ENCODE measurements at regions of chr18 and their contacts with region 1.

Region 1: GRCh38 chr18:74196220-74197119 is 48.1 kb downstream of the TIMM21 start:
- DNase-seq: peak; percentile 57 to 78 (median 72)
- H3K4me3 ChIP-seq: no peak overlapping the region
- H3K4me3 Mint-ChIP-seq: peak overlapping the region; percentile 71 to 90 (median 81)
- H3K27ac ChIP-seq: no peak overlapping the region
- H3K27ac Mint-ChIP-seq: peak overlapping the region in 6 of 7 donors; percentile 23 to 79 (median 65)
- H3K4me1 ChIP-seq: peaks cover 5% of the 10 kb centered on the region
- H3K4me1 Mint-ChIP-seq: peaks cover 0 to 4% (median 0%) of the 10 kb centered on the region in 4 donors
- H3K27me3 ChIP-seq: no peaks in the 10 kb centered on the region
- H3K27me3 Mint-ChIP-seq: peaks cover 2 to 14% of the 10 kb centered on the region in 2 donors

Region 2: DNA sequence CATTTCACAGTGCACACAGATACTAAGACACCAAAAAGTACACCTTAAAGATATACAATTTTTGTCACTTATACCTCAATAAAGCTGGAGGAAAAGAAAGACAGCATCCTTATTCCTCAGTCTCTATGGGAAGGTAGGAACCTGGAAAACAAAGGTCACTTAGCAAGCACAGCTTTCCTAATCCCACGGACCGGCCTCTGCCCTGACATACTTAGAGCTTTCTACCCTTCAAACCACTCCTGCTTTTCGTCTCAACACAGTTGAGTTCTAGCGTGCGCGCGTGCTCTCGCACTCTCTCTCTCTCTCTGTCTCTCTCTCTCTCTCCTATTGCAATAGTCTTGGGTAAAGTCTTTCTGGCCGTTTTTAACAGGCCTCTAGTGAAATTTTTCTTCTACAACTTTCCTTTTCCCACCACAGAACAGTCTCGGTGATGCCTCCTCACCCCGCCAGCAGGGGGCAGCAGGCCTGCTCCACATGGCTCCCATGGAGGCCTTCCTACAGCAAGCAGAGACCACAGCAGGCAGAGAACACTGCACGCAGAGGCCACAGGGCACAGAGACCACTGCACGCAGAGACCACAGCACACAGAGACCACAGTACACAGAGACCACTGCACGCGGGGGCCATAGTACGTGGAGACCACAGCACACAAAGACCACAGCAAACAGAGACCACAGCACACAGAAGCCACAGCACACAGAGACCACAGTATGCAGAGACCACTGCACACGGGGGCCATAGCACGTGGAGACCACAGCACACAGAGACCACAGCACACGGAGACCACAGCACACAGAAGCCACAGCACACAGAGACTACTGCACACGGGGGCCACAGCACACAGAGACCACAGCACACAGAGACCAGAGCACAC is 155.8 kb before region 1 on chr18:
- CTCF ChIA-PET with region 1: no interaction called
- POLR2A ChIA-PET with region 1: no interaction called
- intact Hi-C with region 1: loop called (anchors 5 kb)
- DNase-seq: peak in 4 of 5 donors; percentile 30 to 43 (median 36)
- H3K4me3 ChIP-seq: no peak overlapping the region
- H3K4me3 Mint-ChIP-seq: no peak overlapping the region
- H3K27ac ChIP-seq: no peak overlapping the region
- H3K27ac Mint-ChIP-seq: no peak overlapping the region
- H3K4me1 ChIP-seq: no peaks in the 10 kb centered on the region
- H3K4me1 Mint-ChIP-seq: no peaks in the 10 kb centered on the region
- H3K27me3 ChIP-seq: no peaks in the 10 kb centered on the region
- H3K27me3 Mint-ChIP-seq: peaks cover 2 to 8% of the 10 kb centered on the region in 2 donors

Region 3: DNA sequence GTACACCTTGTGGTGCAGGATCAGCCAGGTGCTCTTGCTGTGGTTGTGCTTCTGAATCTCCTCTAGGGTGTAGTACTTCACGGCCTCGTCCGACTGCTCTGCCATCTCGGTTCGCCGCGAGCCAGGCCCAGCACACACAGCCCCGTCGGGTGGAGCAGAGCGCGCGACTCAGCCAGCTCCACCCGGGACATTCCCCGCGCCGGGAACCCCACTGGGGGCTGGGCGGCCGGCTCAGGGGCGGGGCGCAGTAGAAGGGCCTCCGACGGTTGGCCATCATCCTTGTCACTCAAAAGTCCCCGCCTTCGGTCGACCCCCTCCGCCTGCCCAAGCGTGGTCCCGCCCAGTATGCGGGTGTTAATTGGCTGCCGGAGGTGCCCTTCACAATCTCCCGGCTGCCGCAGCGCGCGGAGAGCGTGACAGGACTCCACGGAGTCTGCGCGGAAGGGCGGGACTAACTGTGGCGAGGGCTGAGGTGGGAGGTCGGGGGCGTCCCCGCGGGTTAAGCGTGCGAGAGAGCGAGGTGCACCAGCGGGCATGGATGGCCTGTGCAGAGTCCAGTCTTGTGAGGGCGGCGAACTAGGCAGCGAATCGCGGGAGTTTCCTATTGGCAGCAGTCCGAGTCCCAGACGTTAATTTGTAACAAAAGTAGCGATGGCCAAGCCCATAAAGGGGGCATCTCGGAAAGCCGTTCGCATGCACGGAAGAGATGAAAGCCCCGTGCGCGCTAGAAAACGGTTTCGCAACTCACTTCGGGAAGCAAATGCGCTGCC is 95.5 kb after region 1 on chr18 and contains the start of gene CYB5A:
- CTCF ChIA-PET with region 1: no interaction called
- POLR2A ChIA-PET with region 1: no interaction called
- intact Hi-C with region 1: loop called (anchors 2 kb)
- DNase-seq: peak; percentile 97 to 99 (median 98)
- H3K4me3 ChIP-seq: peak within 1 kb of the TSS; percentile 90 to 98
- H3K4me3 Mint-ChIP-seq: peak within 1 kb of the TSS in 3 of 8 donors; percentile 95 to 99 (median 96)
- H3K27ac ChIP-seq: peak within 1 kb of the TSS; percentile 74
- H3K27ac Mint-ChIP-seq: peak within 1 kb of the TSS; percentile 65 to 98 (median 88)
- H3K4me1 ChIP-seq: peaks cover 13% of the 10 kb centered on the region
- H3K4me1 Mint-ChIP-seq: peaks cover 6 to 20% (median 11%) of the 10 kb centered on the region in 4 donors
- H3K27me3 ChIP-seq: no peaks in the 10 kb centered on the region
- H3K27me3 Mint-ChIP-seq: no peaks in the 10 kb centered on the region
- total RNA-seq, gene CYB5A: 22.8 to 27.0 TPM

Region 4: DNA sequence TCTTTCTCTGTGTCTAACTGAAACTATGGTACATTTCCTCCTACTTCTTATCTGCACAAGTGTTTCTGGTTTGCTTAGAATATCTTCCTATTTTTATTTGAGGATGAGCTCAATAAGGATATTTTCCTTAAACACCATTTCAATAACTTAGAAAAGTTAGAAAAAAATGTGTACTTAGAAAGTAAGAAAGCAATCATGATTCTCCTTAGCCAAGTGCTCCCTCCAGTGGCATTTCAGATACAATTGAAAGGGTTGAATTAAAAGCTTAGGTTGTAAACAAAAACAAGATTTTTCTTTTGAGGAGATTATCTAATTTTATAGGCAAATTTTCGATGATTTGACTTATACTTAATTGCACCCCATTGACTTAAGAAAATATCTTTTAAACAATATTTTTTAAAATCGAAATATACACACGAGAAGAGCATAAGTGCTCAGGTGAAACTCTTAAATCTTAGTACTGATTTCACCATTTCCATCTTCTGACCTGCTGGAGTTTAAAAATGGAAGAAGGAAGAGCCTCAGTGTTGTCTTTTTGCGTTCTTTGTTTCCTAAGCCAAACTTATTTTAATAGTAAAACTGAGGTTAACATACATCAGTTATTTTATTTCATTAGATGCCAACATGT is 146.1 kb after region 1 on chr18:
- CTCF ChIA-PET with region 1: interaction called, 39 read pairs
- POLR2A ChIA-PET with region 1: no interaction called
- intact Hi-C with region 1: loop called (anchors 1 kb)
- DNase-seq: peak; percentile 25 to 47 (median 42)
- H3K4me3 ChIP-seq: no peak overlapping the region
- H3K4me3 Mint-ChIP-seq: no peak overlapping the region
- H3K27ac ChIP-seq: no peak overlapping the region
- H3K27ac Mint-ChIP-seq: no peak overlapping the region
- H3K4me1 ChIP-seq: no peaks in the 10 kb centered on the region
- H3K4me1 Mint-ChIP-seq: no peaks in the 10 kb centered on the region
- H3K27me3 ChIP-seq: no peaks in the 10 kb centered on the region
- H3K27me3 Mint-ChIP-seq: peaks cover 3 to 4% of the 10 kb centered on the region in 2 donors

Region 5: GRCh38 chr18:74353169-74353775 is 156.8 kb after region 1 on chr18:
- CTCF ChIA-PET with region 1: interaction called, 5 read pairs
- POLR2A ChIA-PET with region 1: no interaction called
- intact Hi-C with region 1: loop called (anchors 1 kb)
- DNase-seq: peak; percentile 66 to 69 (median 67)
- H3K4me3 ChIP-seq: no peak overlapping the region
- H3K4me3 Mint-ChIP-seq: no peak overlapping the region
- H3K27ac ChIP-seq: no peak overlapping the region
- H3K27ac Mint-ChIP-seq: peak overlapping the region in 2 of 7 donors; percentile 11 to 58
- H3K4me1 ChIP-seq: peaks cover 9% of the 10 kb centered on the region
- H3K4me1 Mint-ChIP-seq: peaks cover 0 to 7% (median 5%) of the 10 kb centered on the region in 4 donors
- H3K27me3 ChIP-seq: no peaks in the 10 kb centered on the region
- H3K27me3 Mint-ChIP-seq: peaks cover 0 to 9% of the 10 kb centered on the region in 2 donors